Heart right ventricle (tissue), 16 donors: ENCODE measurements at regions of chr1 and their contacts with region 1.

Region 1: GRCh38 chr1:88973520-88974137 is 18.8 kb downstream of the KYAT3 start:
- DNase-seq: no peak
- ATAC-seq: no peak
- H3K4me3 ChIP-seq: no peak overlapping the region
- H3K27ac ChIP-seq: no peak overlapping the region
- H3K4me1 ChIP-seq: peaks cover 0 to 11% (median 3%) of the 10 kb centered on the region in 9 donors
- H3K27me3 ChIP-seq: no peaks in the 10 kb centered on the region
- CTCF ChIP-seq: peak; percentile 22 to 71 (median 63)

Region 2: GRCh38 chr1:89089962-89090361 is 116.3 kb after region 1 on chr1:
- intact Hi-C with region 1: no loop called
- DNase-seq: no peak
- ATAC-seq: no peak
- H3K4me3 ChIP-seq: no peak overlapping the region
- H3K27ac ChIP-seq: no peak overlapping the region
- H3K4me1 ChIP-seq: no peaks in the 10 kb centered on the region
- H3K27me3 ChIP-seq: no peaks in the 10 kb centered on the region
- CTCF ChIP-seq: no peak

Region 3: DNA sequence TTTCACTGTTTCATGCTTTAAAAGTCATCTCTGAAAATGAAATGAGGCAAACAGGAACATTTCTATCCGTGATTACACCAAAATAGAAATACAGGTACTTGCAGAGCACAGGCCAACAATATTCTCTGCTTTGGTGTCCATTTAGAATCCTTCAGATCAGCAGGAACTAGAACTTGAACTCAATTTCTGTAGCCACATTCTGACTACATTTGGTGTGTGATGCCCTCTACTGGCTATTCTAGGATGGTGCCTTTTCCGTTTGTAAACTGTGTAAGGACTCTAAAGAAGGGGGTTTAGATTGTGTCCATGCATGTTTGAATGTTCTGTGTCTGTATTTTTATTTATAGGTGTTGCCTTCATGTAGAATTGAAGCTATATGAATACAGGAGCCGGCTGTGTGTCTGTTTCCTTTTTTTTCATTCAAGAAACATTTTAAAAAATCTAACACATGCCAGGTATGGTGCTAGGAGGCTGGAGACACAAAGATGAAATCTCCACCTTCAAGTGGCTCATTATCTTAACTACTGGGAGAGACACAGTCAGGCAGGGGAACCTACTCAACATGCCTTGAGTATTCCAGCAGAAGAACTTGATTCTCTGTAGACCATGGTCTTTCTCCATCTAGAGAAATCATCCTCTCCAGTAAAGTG is 1013.7 kb after region 1 on chr1:
- intact Hi-C with region 1: loop called in 1 of 10 experiments (anchors 10 kb)
- DNase-seq: peak in 1 of 2 donors; percentile 64
- ATAC-seq: peak; percentile 69 to 93 (median 90)
- H3K4me3 ChIP-seq: no peak overlapping the region
- H3K27ac ChIP-seq: no peak overlapping the region
- H3K4me1 ChIP-seq: peaks cover 0 to 18% (median 0%) of the 10 kb centered on the region in 9 donors
- H3K27me3 ChIP-seq: no peaks in the 10 kb centered on the region
- CTCF ChIP-seq: peak; percentile 74 to 92 (median 90)